ENCODE measurements at regions of chr4 and their contacts with region 1.

Region 1: GRCh38 chr4:44842531-44842930 is 116.2 kb upstream of the GNPDA2 start:
- DNase-seq: no peak
- H3K4me3 ChIP-seq: no peak overlapping the region
- H3K27ac ChIP-seq: no peak overlapping the region
- H3K4me1 ChIP-seq: no peaks in the 10 kb centered on the region
- H3K27me3 ChIP-seq: no peaks in the 10 kb centered on the region
- CTCF ChIP-seq: no peak
- POLR2A ChIP-seq: no peak

Region 2: DNA sequence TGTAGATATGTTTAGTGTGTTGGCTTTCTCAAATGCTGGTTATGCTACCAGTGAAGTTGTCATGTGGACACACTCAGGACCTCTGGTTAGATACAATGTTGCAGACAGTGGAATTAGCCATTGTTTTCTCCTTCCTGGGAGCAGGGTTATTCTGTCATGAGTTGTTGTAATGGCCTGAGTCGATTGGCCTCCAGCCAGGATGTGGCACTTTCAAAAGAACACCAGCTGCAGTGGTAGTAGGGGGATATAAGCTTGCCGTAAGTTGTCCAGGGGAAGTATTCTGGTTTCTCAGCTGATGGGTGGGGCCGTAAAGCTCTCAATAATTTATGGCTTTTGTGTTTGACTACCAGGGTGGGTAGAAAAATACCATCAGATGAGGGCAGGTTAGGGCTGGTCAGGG is 581.3 kb after region 1 on chr4:
- intact Hi-C with region 1: loop called (anchors 5 kb)
- DNase-seq: no peak
- H3K4me3 ChIP-seq: no peak overlapping the region
- H3K27ac ChIP-seq: no peak overlapping the region
- H3K4me1 ChIP-seq: no peaks in the 10 kb centered on the region
- H3K27me3 ChIP-seq: no peaks in the 10 kb centered on the region
- CTCF ChIP-seq: no peak
- POLR2A ChIP-seq: no peak

Measured in breast epithelium (tissue), 4 donors.